K562 (cell line): ENCODE measurements at regions of chr22 and their contacts with region 1.

Region 1: GRCh38 chr22:22588485-22589164 is 29.6 kb upstream of the PRAME start:
- DNase-seq: no peak
- ATAC-seq: no peak
- H3K4me3 ChIP-seq: no peak overlapping the region
- H3K27ac ChIP-seq: no peak overlapping the region
- H3K4me1 ChIP-seq: no peaks in the 10 kb centered on the region
- H3K27me3 ChIP-seq: peaks cover 17 to 33% of the 10 kb centered on the region in 2 experiments; a peak in 4 of 5 replicates
- CTCF ChIP-seq: no peak
- EP300 ChIP-seq: no peak
- POLR2A ChIP-seq: no peak
- RAD21 ChIP-seq: no peak

Region 2: DNA sequence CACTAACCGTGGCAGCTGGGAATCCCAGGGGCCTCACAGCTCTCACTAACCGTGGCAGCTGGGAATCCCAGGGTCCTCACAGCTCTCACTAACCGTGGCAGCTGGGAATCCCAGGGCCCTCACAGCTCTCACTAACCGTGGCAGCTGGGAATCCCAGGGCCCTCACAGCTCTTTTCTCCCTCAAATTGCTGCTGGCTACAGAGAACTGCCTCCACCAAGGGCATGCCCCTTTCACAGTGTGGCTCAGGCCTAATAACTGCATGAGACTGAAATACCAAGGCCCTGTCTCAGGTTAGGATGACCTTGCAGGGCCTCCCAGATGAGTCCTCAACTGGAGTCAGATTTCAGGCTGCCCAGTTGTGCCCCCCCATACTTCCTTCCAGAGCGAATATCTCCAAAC is 20.7 kb after region 1 on chr22:
- CTCF ChIA-PET with region 1: interaction called, 7 read pairs
- POLR2A ChIA-PET with region 1: interaction called, 16 read pairs
- in situ Hi-C with region 1: no loop called
- intact Hi-C with region 1: no loop called
- DNase-seq: peak in 1 of 4 experiments; percentile 22
- ATAC-seq: peak; percentile 15; the same call in 2 of the 3 replicates
- H3K4me3 ChIP-seq: no peak overlapping the region
- H3K27ac ChIP-seq: no peak overlapping the region
- H3K4me1 ChIP-seq: no peaks in the 10 kb centered on the region
- H3K27me3 ChIP-seq: peaks cover 40 to 44% of the 10 kb centered on the region in 2 experiments
- CTCF ChIP-seq: no peak
- EP300 ChIP-seq: no peak
- POLR2A ChIP-seq: no peak
- RAD21 ChIP-seq: no peak

Region 3: GRCh38 chr22:22616636-22617035 is 28.0 kb after region 1 on chr22:
- CTCF ChIA-PET with region 1: interaction called, 27 read pairs
- POLR2A ChIA-PET with region 1: interaction called, 8 read pairs
- in situ Hi-C with region 1: no loop called
- intact Hi-C with region 1: no loop called
- DNase-seq: peak in 1 of 4 experiments; percentile 40
- ATAC-seq: peak; percentile 1
- H3K4me3 ChIP-seq: no peak overlapping the region
- H3K27ac ChIP-seq: no peak overlapping the region
- H3K4me1 ChIP-seq: no peaks in the 10 kb centered on the region
- H3K27me3 ChIP-seq: peaks cover 52 to 64% of the 10 kb centered on the region in 2 experiments
- CTCF ChIP-seq: no peak
- EP300 ChIP-seq: no peak
- POLR2A ChIP-seq: no peak
- RAD21 ChIP-seq: no peak